Activated CD4-positive, alpha-beta T cell treated with anti-CD3 and anti-CD28 coated beads, Interleukin-2, amount 10 ng/mL, durations not matched to agents 7 days and 5 days (primary cell): ENCODE measurements at regions of chr10 and their contacts with region 1.

Region 1: DNA sequence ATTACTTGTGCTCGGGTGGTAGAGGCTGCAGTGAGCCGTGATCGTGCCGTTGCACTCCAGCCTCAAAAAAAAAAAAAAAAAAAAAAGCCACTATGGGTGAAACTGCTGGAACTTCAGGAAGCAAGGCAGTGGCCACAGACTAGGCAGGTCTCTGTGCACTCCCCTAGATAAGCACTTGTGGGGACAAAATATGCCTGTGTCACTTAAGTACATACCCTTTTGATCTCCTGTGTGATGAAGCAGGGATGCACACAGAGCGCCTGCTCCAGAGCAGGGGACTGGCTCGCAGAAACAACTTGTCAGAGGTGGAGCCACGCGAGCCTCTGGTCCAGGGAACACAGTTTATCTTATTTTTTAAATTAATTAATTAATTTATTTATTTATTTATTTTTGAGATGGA is 42.9 kb upstream of the PSAP start:
- DNase-seq: no peak
- H3K4me3 Mint-ChIP-seq: no peak overlapping the region
- H3K27ac Mint-ChIP-seq: no peak overlapping the region
- H3K4me1 Mint-ChIP-seq: peaks cover 24% of the 10 kb centered on the region
- H3K27me3 Mint-ChIP-seq: peaks cover 10% of the 10 kb centered on the region

Region 2: GRCh38 chr10:71905164-71905563 is 11.2 kb after region 1 on chr10:
- CTCF ChIA-PET with region 1: interaction called, 14 read pairs
- POLR2A ChIA-PET with region 1: no interaction called
- DNase-seq: no peak
- H3K4me3 Mint-ChIP-seq: no peak overlapping the region
- H3K27ac Mint-ChIP-seq: no peak overlapping the region
- H3K4me1 Mint-ChIP-seq: peaks cover 8% of the 10 kb centered on the region
- H3K27me3 Mint-ChIP-seq: no peaks in the 10 kb centered on the region